Mammary epithelial cell (primary cell): ENCODE measurements at regions of chr7 and their contacts with region 1.

Region 1: DNA sequence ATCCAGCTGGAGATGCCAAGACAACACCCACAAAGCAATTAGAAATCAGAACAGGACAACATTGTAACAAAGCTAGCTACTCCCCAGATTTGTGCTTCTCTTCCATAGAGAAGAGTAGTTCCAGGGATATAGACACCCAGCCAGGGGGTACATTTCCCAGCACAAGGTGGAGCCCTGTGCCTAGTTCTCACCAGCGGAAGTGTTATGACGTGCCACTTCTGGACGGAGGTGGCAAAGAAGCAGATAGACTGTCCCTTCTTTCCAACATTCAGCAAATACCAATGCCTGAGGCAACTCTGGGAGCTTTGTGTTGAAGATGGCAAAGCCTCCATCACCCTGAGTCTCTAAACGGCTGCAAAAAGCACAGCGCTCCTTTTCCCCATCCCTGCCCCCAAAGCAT is 23.4 kb upstream of the GSAP start:
- DNase-seq: peak; percentile 56
- H3K4me3 ChIP-seq: no peak overlapping the region
- H3K27ac ChIP-seq: no peak overlapping the region
- H3K4me1 ChIP-seq: peaks cover 32% of the 10 kb centered on the region
- H3K27me3 ChIP-seq: no peaks in the 10 kb centered on the region
- CTCF ChIP-seq: peak; percentile 55 to 74

Region 2: DNA sequence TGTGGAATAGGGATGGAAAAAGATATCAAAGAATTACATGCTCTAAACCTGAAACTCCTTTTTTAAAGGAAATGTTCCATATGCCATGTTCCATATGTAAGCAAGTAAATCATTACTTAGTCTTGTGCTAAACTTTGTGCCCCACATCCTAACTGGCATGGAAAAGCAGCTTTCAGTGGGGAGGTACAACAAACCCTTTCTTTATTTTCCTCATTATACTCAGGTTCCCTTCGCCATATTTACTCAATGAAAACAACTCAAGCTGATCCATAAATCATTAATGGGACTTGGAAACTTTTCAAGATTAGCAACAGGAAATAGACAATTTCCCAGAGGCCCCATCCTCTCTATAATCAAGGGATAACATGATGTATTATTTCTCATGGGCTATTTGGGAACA is 79.5 kb before region 1 on chr7:
- CTCF ChIA-PET with region 1: no interaction called
- dilution Hi-C with region 1: no loop called
- in situ Hi-C with region 1: no loop called
- intact Hi-C with region 1: no loop called
- DNase-seq: no peak
- H3K4me3 ChIP-seq: no peak overlapping the region
- H3K27ac ChIP-seq: no peak overlapping the region
- H3K4me1 ChIP-seq: no peaks in the 10 kb centered on the region
- H3K27me3 ChIP-seq: no peaks in the 10 kb centered on the region
- CTCF ChIP-seq: no peak

Region 3: GRCh38 chr7:77580762-77581350 is 141.3 kb after region 1 on chr7:
- CTCF ChIA-PET with region 1: no interaction called
- dilution Hi-C with region 1: no loop called
- in situ Hi-C with region 1: no loop called
- intact Hi-C with region 1: loop called (anchors 1 kb)
- DNase-seq: no peak
- H3K4me3 ChIP-seq: no peak overlapping the region
- H3K27ac ChIP-seq: no peak overlapping the region
- H3K4me1 ChIP-seq: no peaks in the 10 kb centered on the region
- H3K27me3 ChIP-seq: no peaks in the 10 kb centered on the region
- CTCF ChIP-seq: no peak

Region 4: GRCh38 chr7:77600952-77601351 is 161.4 kb after region 1 on chr7:
- CTCF ChIA-PET with region 1: no interaction called
- dilution Hi-C with region 1: no loop called
- in situ Hi-C with region 1: no loop called
- intact Hi-C with region 1: loop called (anchors 5 kb)
- DNase-seq: no peak
- H3K4me3 ChIP-seq: no peak overlapping the region
- H3K27ac ChIP-seq: no peak overlapping the region
- H3K4me1 ChIP-seq: no peaks in the 10 kb centered on the region
- H3K27me3 ChIP-seq: no peaks in the 10 kb centered on the region
- CTCF ChIP-seq: no peak

Region 5: GRCh38 chr7:77631820-77632219 is 192.2 kb after region 1 on chr7:
- CTCF ChIA-PET with region 1: no interaction called
- dilution Hi-C with region 1: no loop called
- in situ Hi-C with region 1: no loop called
- intact Hi-C with region 1: loop called (anchors 5 kb)
- DNase-seq: no peak
- H3K4me3 ChIP-seq: no peak overlapping the region
- H3K27ac ChIP-seq: no peak overlapping the region
- H3K4me1 ChIP-seq: no peaks in the 10 kb centered on the region
- H3K27me3 ChIP-seq: no peaks in the 10 kb centered on the region
- CTCF ChIP-seq: no peak